A549 (cell line): ENCODE measurements at regions of chr9 and their contacts with region 1.

Region 1: GRCh38 chr9:119544492-119545249 is 175.4 kb upstream of the BRINP1 start:
- DNase-seq: no peak
- ATAC-seq: no peak
- H3K4me3 ChIP-seq: no peak overlapping the region
- H3K27ac ChIP-seq: no peak overlapping the region
- H3K4me1 ChIP-seq: no peaks in the 10 kb centered on the region
- CTCF ChIP-seq: no peak
- EP300 ChIP-seq: no peak
- POLR2A ChIP-seq: no peak
- RAD21 ChIP-seq: no peak

Region 2: GRCh38 chr9:119556129-119556875 is 11.6 kb after region 1 on chr9:
- CTCF ChIA-PET with region 1: interaction called, 11 read pairs
- POLR2A ChIA-PET with region 1: no interaction called
- DNase-seq: peak; percentile 31 to 44
- ATAC-seq: peak; percentile 86 to 99
- H3K4me3 ChIP-seq: peak overlapping the region; percentile 29; the same call in 1 of the 3 replicates
- H3K27ac ChIP-seq: peak overlapping the region in 1 of 2 experiments; percentile 40; a peak in 1 of 6 replicates
- H3K4me1 ChIP-seq: no peaks in the 10 kb centered on the region
- CTCF ChIP-seq: peak; percentile 69
- EP300 ChIP-seq: no peak
- POLR2A ChIP-seq: no peak
- RAD21 ChIP-seq: peak; percentile 70

Region 3: GRCh38 chr9:119818726-119819435 is 274.2 kb after region 1 on chr9:
- CTCF ChIA-PET with region 1: no interaction called
- POLR2A ChIA-PET with region 1: no interaction called
- DNase-seq: no peak
- ATAC-seq: no peak
- H3K4me3 ChIP-seq: no peak overlapping the region
- H3K27ac ChIP-seq: no peak overlapping the region
- H3K4me1 ChIP-seq: 0 out of 3 replicates have a peak, but pooled peaks cover 3% of the 10 kb centered on the region
- CTCF ChIP-seq: no peak
- EP300 ChIP-seq: no peak
- POLR2A ChIP-seq: no peak
- RAD21 ChIP-seq: no peak